Gastrocnemius medialis (tissue), 4 donors: ENCODE measurements at regions of chr19 and their contacts with region 1.

Region 1: GRCh38 chr19:48582168-48582567 is 24.4 kb upstream of the SPACA4 start:
- DNase-seq: no peak
- ATAC-seq: no peak
- H3K4me3 ChIP-seq: no peak overlapping the region
- H3K27ac ChIP-seq: no peak overlapping the region
- H3K4me1 ChIP-seq: peaks cover 0 to 5% of the 10 kb centered on the region in 2 donors
- H3K27me3 ChIP-seq: no peaks in the 10 kb centered on the region
- CTCF ChIP-seq: no peak
- POLR2A ChIP-seq: no peak

Region 2: DNA sequence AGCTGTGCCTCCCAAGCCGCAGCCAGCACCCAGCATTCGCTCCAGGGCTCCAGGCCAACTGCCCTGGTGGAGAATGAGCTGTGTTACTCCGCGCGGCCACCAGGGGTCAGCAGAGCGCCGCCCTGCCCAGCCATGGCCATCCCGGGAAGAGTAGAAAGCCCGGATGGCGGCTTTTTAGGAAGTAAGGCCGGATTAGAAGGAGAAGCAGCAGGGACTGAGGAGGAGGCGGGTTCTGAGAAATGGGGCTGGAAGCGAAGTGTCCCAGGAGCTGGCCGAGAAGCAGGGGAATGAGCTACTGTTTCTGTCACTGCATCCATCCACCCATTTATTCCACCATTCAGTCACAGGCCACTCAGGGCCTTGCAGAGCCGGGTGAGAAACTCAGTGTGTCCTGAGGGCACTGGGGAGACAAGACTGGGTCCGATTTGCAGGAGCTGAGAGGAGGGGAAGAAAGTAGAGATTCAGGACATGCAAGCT is 1569.1 kb before region 1 on chr19:
- in situ Hi-C with region 1: no loop called
- intact Hi-C with region 1: no loop called
- DNase-seq: peak; percentile 41 to 68
- ATAC-seq: peak; percentile 89 to 91
- H3K4me3 ChIP-seq: no peak overlapping the region
- H3K27ac ChIP-seq: no peak overlapping the region
- H3K4me1 ChIP-seq: peaks cover 0 to 4% of the 10 kb centered on the region in 2 donors
- H3K27me3 ChIP-seq: no peaks in the 10 kb centered on the region
- CTCF ChIP-seq: peak; percentile 92 to 99 (median 97)
- POLR2A ChIP-seq: no peak

Region 3: DNA sequence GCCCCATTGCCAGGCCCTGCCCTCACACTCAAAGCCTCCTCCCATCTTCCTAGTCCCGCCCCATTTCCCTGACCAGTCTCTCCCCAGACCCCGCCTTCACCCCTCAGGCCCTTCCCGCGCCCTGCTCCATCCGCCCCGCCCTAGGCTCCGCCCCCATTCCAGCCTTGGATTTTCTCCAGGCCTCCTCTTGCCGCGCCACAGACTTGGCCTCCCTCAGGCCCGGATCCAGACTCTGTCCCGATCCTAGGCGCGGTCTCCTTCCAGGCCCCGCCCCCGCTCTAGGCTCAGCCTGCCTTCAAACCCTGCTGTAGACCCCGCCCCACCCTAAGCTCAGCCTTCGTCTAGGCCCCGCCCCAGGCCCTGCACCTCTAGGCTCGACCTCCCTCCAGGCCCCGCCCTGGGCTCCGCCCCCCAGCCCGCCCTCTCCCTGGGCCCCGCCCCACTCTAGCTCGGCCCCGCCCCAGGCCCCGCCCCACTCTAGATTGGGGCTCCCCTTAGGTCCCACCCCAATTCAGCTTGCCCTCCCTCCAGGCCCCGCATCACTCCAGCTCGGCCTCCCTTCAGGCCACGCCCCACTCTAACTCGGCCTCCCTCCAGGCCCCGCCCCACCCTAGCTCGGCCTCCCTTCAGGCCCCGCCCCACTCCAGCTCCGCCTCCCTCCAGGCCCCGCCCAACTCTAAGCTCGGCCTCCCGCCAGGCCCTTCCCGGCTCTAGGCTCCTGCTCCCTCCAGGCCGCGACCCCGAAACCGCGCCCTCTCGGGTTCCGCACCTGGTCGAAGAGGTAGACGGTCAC is 89.0 kb before region 1 on chr19:
- in situ Hi-C with region 1: loop called in 2 of 4 experiments (anchors 5 kb)
- intact Hi-C with region 1: loop called (anchors 1 kb)
- DNase-seq: peak; percentile 80 to 83
- ATAC-seq: peak; percentile 67 to 70
- H3K4me3 ChIP-seq: peak overlapping the region; percentile 51 to 63 (median 52)
- H3K27ac ChIP-seq: peak overlapping the region; percentile 6 to 68 (median 54)
- H3K4me1 ChIP-seq: peaks cover 3 to 8% of the 10 kb centered on the region in 2 donors
- H3K27me3 ChIP-seq: peaks cover 25 to 50% (median 40%) of the 10 kb centered on the region in 3 donors
- CTCF ChIP-seq: no peak
- POLR2A ChIP-seq: peak in 1 of 2 donors; percentile 39

Region 4: DNA sequence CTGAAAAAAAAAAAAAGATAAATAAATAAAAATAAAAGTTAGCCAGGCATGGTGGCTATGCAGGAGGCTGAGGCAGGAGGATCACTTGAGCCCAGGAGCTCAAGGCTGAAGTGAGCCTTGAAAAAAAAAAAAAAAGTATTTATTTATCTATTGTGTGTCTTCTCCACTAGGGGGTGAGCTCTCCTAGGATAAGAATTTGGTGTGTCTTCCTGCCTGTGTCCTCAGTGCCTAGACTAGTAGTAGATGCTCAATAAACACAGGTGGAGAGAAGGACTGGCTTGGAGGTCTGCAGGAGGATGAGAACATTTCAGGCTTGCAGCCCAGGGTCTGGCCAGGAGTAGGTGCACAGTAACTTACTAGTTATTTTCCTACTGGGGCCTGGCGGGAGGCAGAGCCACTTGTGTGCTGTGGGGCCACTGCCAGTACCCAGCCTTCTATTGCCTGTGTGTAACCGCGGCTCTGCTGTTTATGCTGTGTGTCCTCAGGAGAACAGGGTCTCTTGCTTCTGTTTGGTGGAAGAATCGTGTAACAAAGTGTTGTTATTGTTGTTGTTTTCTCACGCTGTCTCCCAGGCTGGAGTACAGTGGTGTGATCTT is 75.9 kb before region 1 on chr19:
- in situ Hi-C with region 1: loop called in 2 of 4 experiments (anchors 5 kb)
- intact Hi-C with region 1: loop called (anchors 1 kb)
- DNase-seq: no peak
- ATAC-seq: peak in 1 of 2 donors; percentile 49
- H3K4me3 ChIP-seq: no peak overlapping the region
- H3K27ac ChIP-seq: no peak overlapping the region
- H3K4me1 ChIP-seq: peaks cover 4 to 6% of the 10 kb centered on the region in 2 donors
- H3K27me3 ChIP-seq: peaks cover 8 to 19% (median 11%) of the 10 kb centered on the region in 3 donors
- CTCF ChIP-seq: peak; percentile 34 to 67 (median 54)
- POLR2A ChIP-seq: no peak

Region 5: DNA sequence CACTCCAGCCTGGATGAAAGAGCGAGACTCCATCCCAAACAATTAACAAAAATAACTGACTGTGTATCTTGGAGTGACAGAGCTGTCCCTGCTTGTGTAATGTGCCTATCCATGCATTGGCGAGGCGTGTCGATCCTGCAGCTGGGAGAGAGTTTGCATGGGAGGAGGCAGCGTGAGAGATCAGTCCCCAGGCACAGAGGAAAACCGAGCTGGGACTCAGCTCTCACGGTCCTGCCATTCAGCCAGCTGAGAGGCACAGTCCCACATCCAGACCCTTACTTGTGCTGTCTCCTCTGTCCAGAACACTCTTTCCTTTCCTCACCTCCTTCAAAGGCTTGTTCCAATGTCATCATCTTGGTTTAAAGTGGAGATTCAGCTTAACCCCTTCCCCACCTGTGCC is 42.1 kb before region 1 on chr19:
- in situ Hi-C with region 1: no loop called
- intact Hi-C with region 1: no loop called
- DNase-seq: no peak
- ATAC-seq: no peak
- H3K4me3 ChIP-seq: no peak overlapping the region
- H3K27ac ChIP-seq: no peak overlapping the region
- H3K4me1 ChIP-seq: peaks cover 3 to 4% of the 10 kb centered on the region in 2 donors
- H3K27me3 ChIP-seq: no peaks in the 10 kb centered on the region
- CTCF ChIP-seq: no peak
- POLR2A ChIP-seq: no peak